Activated CD4-positive, alpha-beta memory T cell treated with anti-CD3 and anti-CD28 coated beads, Interleukin-2, amount 10 ng/mL, durations not matched to agents 7 days and 5 days (primary cell): ENCODE measurements at regions of chr1 and their contacts with region 1.

Region 1: DNA sequence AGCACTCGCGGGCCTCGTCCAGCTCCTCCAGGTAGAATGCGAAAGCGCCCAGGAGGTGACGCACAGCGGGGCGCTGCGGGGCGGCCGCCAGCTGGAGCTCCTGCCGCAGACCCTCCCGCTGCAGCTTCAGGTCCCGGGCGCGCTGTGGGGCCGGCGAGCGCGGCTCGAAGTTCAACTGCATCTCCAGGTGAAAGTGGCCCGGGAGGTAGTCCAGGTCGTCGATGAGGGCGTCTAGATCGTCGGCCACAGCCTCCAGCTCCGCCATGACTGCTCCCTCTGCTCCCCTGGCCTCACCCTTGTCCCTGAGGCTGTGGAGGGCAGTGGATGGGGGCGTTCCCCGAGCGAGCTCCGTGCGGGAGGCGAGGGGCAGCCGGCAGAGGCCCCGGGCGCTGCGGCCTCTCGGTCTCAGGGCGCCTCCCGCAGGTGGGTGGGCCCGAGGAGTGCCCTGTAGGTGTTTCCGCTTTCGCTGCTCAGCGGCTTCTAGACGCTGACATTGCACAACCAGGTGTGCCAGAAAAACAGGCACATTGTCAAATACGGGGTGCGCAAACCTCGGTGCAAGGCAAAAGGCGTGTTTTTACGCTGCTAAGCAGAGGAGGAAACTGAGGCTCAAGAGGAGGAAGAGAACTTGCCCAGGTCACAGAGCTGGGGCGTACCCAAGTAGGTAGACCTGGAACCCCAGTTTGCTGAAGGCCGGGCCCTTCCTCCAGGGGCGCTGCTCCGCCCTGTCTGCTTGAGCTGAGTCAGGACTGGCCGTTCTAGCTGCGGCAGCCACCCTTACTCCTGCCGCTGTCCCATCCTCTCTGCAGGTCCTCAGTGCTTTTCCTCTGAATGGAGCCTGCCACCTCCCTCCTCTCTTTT is at the start of gene TTC22:
- DNase-seq: peak; percentile 83
- H3K4me3 Mint-ChIP-seq: peak within 1 kb of the TSS; percentile 88
- H3K27ac Mint-ChIP-seq: peak within 1 kb of the TSS; percentile 95
- H3K4me1 Mint-ChIP-seq: peaks cover 76% of the 10 kb centered on the region
- H3K27me3 Mint-ChIP-seq: no peaks in the 10 kb centered on the region
- total RNA-seq, gene TTC22: 19.8 to 20.9 TPM

Region 2: GRCh38 chr1:54439550-54440223 is 361.4 kb before region 1 on chr1:
- CTCF ChIA-PET with region 1: no interaction called
- POLR2A ChIA-PET with region 1: no interaction called
- DNase-seq: no peak
- H3K4me3 Mint-ChIP-seq: no peak overlapping the region
- H3K27ac Mint-ChIP-seq: no peak overlapping the region
- H3K4me1 Mint-ChIP-seq: no peaks in the 10 kb centered on the region
- H3K27me3 Mint-ChIP-seq: peaks cover under 1% of the 10 kb centered on the region

Region 3: GRCh38 chr1:54671985-54672608 is 129.0 kb before region 1 on chr1:
- CTCF ChIA-PET with region 1: interaction called, 17 read pairs
- POLR2A ChIA-PET with region 1: interaction called, 4 read pairs
- DNase-seq: peak; percentile 85
- H3K4me3 Mint-ChIP-seq: no peak overlapping the region
- H3K27ac Mint-ChIP-seq: no peak overlapping the region
- H3K4me1 Mint-ChIP-seq: peaks cover 18% of the 10 kb centered on the region
- H3K27me3 Mint-ChIP-seq: peaks cover 5% of the 10 kb centered on the region

Region 4: DNA sequence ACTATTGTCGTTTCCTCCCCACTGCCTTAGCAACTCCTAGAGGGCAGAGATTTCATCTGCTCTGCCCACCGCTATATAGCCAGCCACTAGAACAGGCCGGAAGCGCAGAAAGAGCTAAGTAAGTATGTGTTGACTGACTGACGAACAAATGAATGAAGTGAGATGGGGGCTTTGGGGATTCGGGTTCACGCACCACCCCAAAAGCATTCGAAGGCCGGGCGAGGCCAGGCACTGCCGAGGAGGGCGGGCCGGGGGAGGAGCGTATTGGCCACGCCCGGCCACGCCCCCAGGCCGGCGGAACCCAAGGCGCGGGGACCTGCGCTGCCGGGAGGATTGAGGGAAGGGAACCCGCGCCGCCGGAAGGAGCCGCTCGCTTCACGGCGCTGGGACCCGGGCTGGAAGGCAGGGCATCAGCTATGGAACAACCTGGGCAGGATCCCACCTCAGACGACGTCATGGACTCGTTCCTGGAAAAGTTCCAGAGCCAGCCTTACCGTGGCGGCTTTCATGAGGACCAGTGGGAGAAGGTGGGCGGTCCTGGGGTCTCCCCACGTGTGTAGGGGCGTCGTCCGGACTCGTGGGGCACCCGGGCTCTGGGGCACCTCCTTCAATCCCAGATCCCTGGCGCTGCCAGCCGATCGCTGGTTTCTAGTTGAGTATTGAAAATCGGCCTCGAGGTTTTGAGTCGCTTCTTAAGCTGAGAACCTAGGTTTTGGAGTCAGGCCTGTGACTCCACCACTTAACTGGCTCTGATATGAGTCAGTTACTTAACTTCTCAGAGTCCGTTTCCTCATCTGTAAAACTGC is 85.4 kb before region 1 on chr1 and contains the start of gene TTC4:
- CTCF ChIA-PET with region 1: interaction called, 12 read pairs
- POLR2A ChIA-PET with region 1: interaction called, 13 read pairs
- DNase-seq: peak; percentile 86
- H3K4me3 Mint-ChIP-seq: peak within 1 kb of the TSS; percentile 81
- H3K27ac Mint-ChIP-seq: peak within 1 kb of the TSS; percentile 78
- H3K4me1 Mint-ChIP-seq: peaks cover 30% of the 10 kb centered on the region
- H3K27me3 Mint-ChIP-seq: peaks cover 3% of the 10 kb centered on the region
- total RNA-seq, gene TTC4: 17.6 to 20.6 TPM

Region 5: DNA sequence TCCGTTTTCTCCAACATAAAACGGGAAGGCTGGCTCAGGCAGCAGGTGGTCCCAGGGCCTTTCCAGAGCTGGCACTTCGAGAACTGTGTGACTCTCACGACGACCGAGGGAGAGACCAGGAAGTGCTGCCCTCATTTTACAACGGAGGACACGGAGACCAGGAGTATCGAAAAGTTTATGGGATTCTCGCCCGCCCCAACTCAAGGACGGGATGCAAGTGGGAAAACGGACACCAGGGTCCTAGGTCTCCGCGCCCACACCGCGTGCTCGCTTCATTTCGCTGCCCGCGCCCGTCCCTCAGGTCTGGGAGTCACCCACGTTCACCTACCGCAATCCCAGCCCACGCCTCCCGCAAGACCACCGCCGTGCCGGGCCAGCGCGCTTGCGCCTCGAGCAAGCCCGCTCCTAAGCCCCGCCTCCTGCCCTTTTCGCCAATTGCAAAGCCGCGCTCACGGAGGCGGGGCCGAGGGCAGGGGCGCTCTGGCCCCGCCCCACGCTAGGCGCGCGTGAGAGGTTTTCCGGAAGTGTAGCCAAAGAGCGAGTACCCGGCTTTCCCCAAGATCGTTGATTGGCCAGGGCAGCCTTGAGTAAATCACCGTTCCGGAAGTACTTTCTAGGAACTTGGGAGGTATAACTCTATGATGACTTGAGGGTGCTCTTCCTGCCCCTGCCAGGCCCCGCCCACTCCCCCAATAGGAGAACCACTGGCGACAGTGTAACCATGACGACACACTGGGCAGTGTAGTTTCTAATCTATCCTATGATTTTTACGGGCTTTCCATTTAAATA is 36.8 kb before region 1 on chr1 and contains the start of gene PARS2:
- CTCF ChIA-PET with region 1: interaction called, 18 read pairs
- POLR2A ChIA-PET with region 1: interaction called, 8 read pairs
- DNase-seq: peak; percentile 96
- H3K4me3 Mint-ChIP-seq: peak within 1 kb of the TSS; percentile 89
- H3K27ac Mint-ChIP-seq: peak within 1 kb of the TSS; percentile 71
- H3K4me1 Mint-ChIP-seq: peaks cover 17% of the 10 kb centered on the region
- H3K27me3 Mint-ChIP-seq: no peaks in the 10 kb centered on the region
- total RNA-seq, gene PARS2: 3.3 to 4.0 TPM